HepG2 (cell line): ENCODE measurements at regions of chr17 and their contacts with region 1.

Region 1: GRCh38 chr17:6413065-6413464 is 21.9 kb downstream of the AIPL1 start:
- DNase-seq: peak; percentile 40
- ATAC-seq: peak; percentile 63; the same call in 2 of the 3 replicates
- H3K4me3 ChIP-seq: no peak overlapping the region
- H3K27ac ChIP-seq: no peak overlapping the region
- H3K4me1 ChIP-seq: no peaks in the 10 kb centered on the region
- H3K27me3 ChIP-seq: peaks cover 0 to 16% of the 10 kb centered on the region in 2 experiments; a peak in 3 of 5 replicates
- CTCF ChIP-seq: peak; percentile 72
- EP300 ChIP-seq: no peak
- POLR2A ChIP-seq: no peak
- RAD21 ChIP-seq: peak; percentile 61

Region 2: DNA sequence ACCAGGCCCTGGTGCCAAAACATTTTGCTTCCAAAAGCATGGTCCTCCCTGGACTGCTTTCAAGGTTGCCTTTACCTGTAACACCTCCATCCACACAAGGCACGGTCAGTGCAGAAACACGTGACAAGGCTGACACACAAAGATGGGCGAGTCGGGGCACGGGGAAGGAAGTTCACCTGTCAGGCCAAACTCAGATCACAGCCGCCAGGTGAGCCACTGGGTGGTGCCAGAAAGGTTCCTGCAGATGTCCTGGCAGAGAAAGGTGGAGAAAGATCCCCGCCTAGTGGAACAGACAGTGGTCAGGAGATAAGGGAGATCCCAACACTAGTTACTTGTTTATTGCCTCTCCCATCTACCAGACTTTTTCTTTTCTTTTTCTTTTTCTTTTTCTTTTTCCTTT is 133.4 kb before region 1 on chr17:
- CTCF ChIA-PET with region 1: no interaction called
- POLR2A ChIA-PET with region 1: no interaction called
- in situ Hi-C with region 1: no loop called
- intact Hi-C with region 1: loop called (anchors 5 kb)
- DNase-seq: peak; percentile 38
- ATAC-seq: peak; percentile 53; the same call in 2 of the 3 replicates
- H3K4me3 ChIP-seq: no peak overlapping the region
- H3K27ac ChIP-seq: no peak overlapping the region
- H3K4me1 ChIP-seq: no peaks in the 10 kb centered on the region
- H3K27me3 ChIP-seq: no peaks in the 10 kb centered on the region
- CTCF ChIP-seq: peak; percentile 71
- EP300 ChIP-seq: no peak
- POLR2A ChIP-seq: no peak
- RAD21 ChIP-seq: peak; percentile 42; the same call in 1 of the 2 replicates

Region 3: GRCh38 chr17:6286239-6286638 is 126.8 kb before region 1 on chr17:
- CTCF ChIA-PET with region 1: no interaction called
- POLR2A ChIA-PET with region 1: no interaction called
- in situ Hi-C with region 1: loop called (anchors 5 kb)
- intact Hi-C with region 1: no loop called
- DNase-seq: peak; percentile 4
- ATAC-seq: no peak
- H3K4me3 ChIP-seq: no peak overlapping the region
- H3K27ac ChIP-seq: no peak overlapping the region
- H3K4me1 ChIP-seq: no peaks in the 10 kb centered on the region
- H3K27me3 ChIP-seq: no peaks in the 10 kb centered on the region
- CTCF ChIP-seq: peak; percentile 28; the same call in 1 of the 2 replicates
- EP300 ChIP-seq: no peak
- POLR2A ChIP-seq: no peak
- RAD21 ChIP-seq: no peak